Heart left ventricle (tissue), 16 donors: ENCODE measurements at regions of chr22 and their contacts with region 1.

Region 1: DNA sequence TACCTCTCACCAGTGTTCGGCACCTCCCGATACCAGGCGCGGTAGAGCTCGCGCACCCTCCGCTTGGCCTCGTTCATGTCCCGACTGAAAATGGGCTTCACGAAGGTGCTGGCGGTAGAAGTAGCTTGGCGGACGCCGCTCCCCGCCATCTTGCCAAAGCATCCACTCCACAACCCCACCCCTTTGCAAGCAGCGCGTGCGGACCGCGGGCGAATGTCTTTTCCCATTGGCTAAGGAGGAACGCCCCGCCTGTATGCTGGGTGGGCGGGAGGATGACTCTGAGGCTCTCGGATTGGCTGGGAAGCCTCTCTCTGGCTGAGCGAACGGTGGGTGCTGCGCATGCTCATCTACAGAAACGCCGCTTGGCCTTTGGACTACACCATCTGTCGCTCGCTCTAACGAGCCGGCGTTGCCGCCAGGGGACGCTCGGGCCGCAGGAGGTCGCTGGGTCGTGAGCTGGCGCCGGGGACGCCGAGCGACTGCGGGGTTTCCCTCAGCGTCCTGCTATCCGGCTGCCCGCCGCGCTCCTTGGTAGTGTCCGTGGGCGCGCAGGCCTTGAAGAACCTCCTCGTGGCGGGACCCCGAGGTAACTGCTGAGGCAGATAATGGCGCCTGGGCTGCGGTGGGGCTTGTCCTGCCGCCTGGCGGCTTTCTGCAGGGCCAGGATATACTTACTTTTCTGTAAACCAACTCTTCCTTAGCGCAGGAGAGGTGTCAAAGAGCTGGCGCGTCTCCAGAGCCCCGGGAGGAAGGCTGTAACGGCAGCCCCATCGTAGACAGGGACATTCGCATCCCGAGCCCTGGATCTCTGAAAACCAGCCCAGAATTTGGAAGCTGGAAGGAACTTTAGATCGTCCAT is at the start of gene NDUFA6:
- DNase-seq: peak; percentile 98 to 99 (median 99)
- ATAC-seq: peak; percentile 96 to 99 (median 98)
- H3K4me3 ChIP-seq: peak within 1 kb of the TSS; percentile 65 to 93 (median 84)
- H3K27ac ChIP-seq: peak within 1 kb of the TSS; percentile 95 to 99 (median 98)
- H3K4me1 ChIP-seq: peaks cover 3 to 42% (median 27%) of the 10 kb centered on the region in 12 donors
- H3K27me3 ChIP-seq: no peaks in the 10 kb centered on the region
- CTCF ChIP-seq: peak; percentile 84 to 99 (median 96)
- POLR2A ChIP-seq: peak; percentile 57 to 89
- total RNA-seq, gene NDUFA6: 159 to 294 (median 255) TPM

Region 2: GRCh38 chr22:42070517-42071422 is 20.1 kb before region 1 on chr22 and contains the start of gene NAGA:
- intact Hi-C with region 1: loop called in 1 of 10 experiments (anchors 1 kb)
- DNase-seq: peak; percentile 95 to 99 (median 98)
- ATAC-seq: peak; percentile 95 to 98 (median 96)
- H3K4me3 ChIP-seq: peak within 1 kb of the TSS; percentile 37 to 98 (median 68)
- H3K27ac ChIP-seq: peak within 1 kb of the TSS; percentile 67 to 94 (median 86)
- H3K4me1 ChIP-seq: peaks cover 3 to 58% (median 34%) of the 10 kb centered on the region in 12 donors
- H3K27me3 ChIP-seq: no peaks in the 10 kb centered on the region
- CTCF ChIP-seq: no peak
- POLR2A ChIP-seq: peak in 1 of 2 donors; percentile 90
- total RNA-seq, gene NAGA: 10.6 to 48.3 (median 13.8) TPM

Region 3: GRCh38 chr22:42079319-42080251 is 11.2 kb before region 1 on chr22 and contains the start of gene SMDT1:
- intact Hi-C with region 1: loop called in 2 of 10 experiments (anchors 1 kb)
- DNase-seq: peak; percentile 100
- ATAC-seq: peak; percentile 91 to 95 (median 93)
- H3K4me3 ChIP-seq: peak within 1 kb of the TSS; percentile 43 to 82 (median 70)
- H3K27ac ChIP-seq: peak within 1 kb of the TSS; percentile 95 to 99 (median 98)
- H3K4me1 ChIP-seq: peaks cover 2 to 57% (median 33%) of the 10 kb centered on the region in 12 donors
- H3K27me3 ChIP-seq: no peaks in the 10 kb centered on the region
- CTCF ChIP-seq: no peak
- POLR2A ChIP-seq: peak; percentile 52 to 96
- total RNA-seq, gene SMDT1: 15.3 to 179 (median 115) TPM

Region 4: GRCh38 chr22:42369245-42370041 is 278.6 kb after region 1 on chr22:
- intact Hi-C with region 1: loop called in 1 of 10 experiments (anchors 5 kb)
- DNase-seq: peak; percentile 90 to 95 (median 94)
- ATAC-seq: peak; percentile 91 to 98 (median 96)
- H3K4me3 ChIP-seq: peak overlapping the region; percentile 27 to 75 (median 62)
- H3K27ac ChIP-seq: peak overlapping the region in 4 of 12 donors; percentile 14 to 61 (median 55)
- H3K4me1 ChIP-seq: peaks cover 0 to 50% (median 30%) of the 10 kb centered on the region in 12 donors
- H3K27me3 ChIP-seq: peaks cover 0 to 42% (median 7%) of the 10 kb centered on the region in 9 donors
- CTCF ChIP-seq: no peak
- POLR2A ChIP-seq: no peak

Region 5: GRCh38 chr22:42437488-42438292 is 346.9 kb after region 1 on chr22:
- intact Hi-C with region 1: loop called in 9 of 10 experiments (anchors 2 to 10 kb)
- DNase-seq: peak; percentile 72 to 90 (median 78)
- ATAC-seq: peak; percentile 72 to 85 (median 84)
- H3K4me3 ChIP-seq: peak overlapping the region in 11 of 12 donors; percentile 3 to 57 (median 49)
- H3K27ac ChIP-seq: peak overlapping the region in 2 of 12 donors; percentile 12 to 66
- H3K4me1 ChIP-seq: peaks cover 0 to 76% (median 16%) of the 10 kb centered on the region in 12 donors
- H3K27me3 ChIP-seq: peaks cover 0 to 25% (median 3%) of the 10 kb centered on the region in 9 donors
- CTCF ChIP-seq: peak; percentile 86 to 98 (median 96)
- POLR2A ChIP-seq: no peak